Naive thymus-derived CD8-positive, alpha-beta T cell (primary cell): ENCODE measurements at regions of chr7 and their contacts with region 1.

Region 1: GRCh38 chr7:99943641-99944496 is 14.4 kb upstream of the GJC3 start:
- DNase-seq: no peak
- ATAC-seq: peak in 1 of 2 donors; percentile 12
- H3K4me3 Mint-ChIP-seq: peak overlapping the region; percentile 48 to 87 (median 68)
- H3K27ac Mint-ChIP-seq: peak overlapping the region in 7 of 10 donors; percentile 9 to 86 (median 71)
- H3K4me1 Mint-ChIP-seq: peaks cover 4 to 16% (median 13%) of the 10 kb centered on the region in 4 donors
- H3K27me3 Mint-ChIP-seq: peaks cover 7 to 30% (median 10%) of the 10 kb centered on the region in 5 donors

Region 2: GRCh38 chr7:99918959-99919813 is 24.7 kb before region 1 on chr7 and contains the start of gene TRIM4:
- POLR2A ChIA-PET with region 1: interaction called, 12 read pairs
- DNase-seq: peak; percentile 76 to 94 (median 87)
- ATAC-seq: peak; percentile 97 to 98
- H3K4me3 Mint-ChIP-seq: peak within 1 kb of the TSS; percentile 89 to 98 (median 94)
- H3K27ac Mint-ChIP-seq: peak within 1 kb of the TSS; percentile 96 to 99 (median 98)
- H3K4me1 Mint-ChIP-seq: peaks cover 37 to 63% (median 54%) of the 10 kb centered on the region in 4 donors
- H3K27me3 Mint-ChIP-seq: no peaks in the 10 kb centered on the region
- polyA plus RNA-seq, gene TRIM4: 22.2 to 32.2 (median 31.0) TPM